ENCODE measurements at regions of chr18 and their contacts with region 1.

Region 1: GRCh38 chr18:26405190-26405801 is 143.1 kb downstream of the KCTD1 start:
- DNase-seq: peak; percentile 43 to 83 (median 64)
- H3K4me3 ChIP-seq: no peak overlapping the region
- H3K27ac ChIP-seq: no peak overlapping the region
- H3K4me1 ChIP-seq: no peaks in the 10 kb centered on the region
- H3K27me3 ChIP-seq: no peaks in the 10 kb centered on the region
- CTCF ChIP-seq: peak; percentile 21 to 59 (median 50)
- POLR2A ChIP-seq: no peak

Region 2: GRCh38 chr18:25998461-25998860 is 406.8 kb before region 1 on chr18:
- intact Hi-C with region 1: no loop called
- DNase-seq: no peak
- H3K4me3 ChIP-seq: no peak overlapping the region
- H3K27ac ChIP-seq: no peak overlapping the region
- H3K4me1 ChIP-seq: no peaks in the 10 kb centered on the region
- H3K27me3 ChIP-seq: no peaks in the 10 kb centered on the region
- CTCF ChIP-seq: no peak
- POLR2A ChIP-seq: no peak

Region 3: DNA sequence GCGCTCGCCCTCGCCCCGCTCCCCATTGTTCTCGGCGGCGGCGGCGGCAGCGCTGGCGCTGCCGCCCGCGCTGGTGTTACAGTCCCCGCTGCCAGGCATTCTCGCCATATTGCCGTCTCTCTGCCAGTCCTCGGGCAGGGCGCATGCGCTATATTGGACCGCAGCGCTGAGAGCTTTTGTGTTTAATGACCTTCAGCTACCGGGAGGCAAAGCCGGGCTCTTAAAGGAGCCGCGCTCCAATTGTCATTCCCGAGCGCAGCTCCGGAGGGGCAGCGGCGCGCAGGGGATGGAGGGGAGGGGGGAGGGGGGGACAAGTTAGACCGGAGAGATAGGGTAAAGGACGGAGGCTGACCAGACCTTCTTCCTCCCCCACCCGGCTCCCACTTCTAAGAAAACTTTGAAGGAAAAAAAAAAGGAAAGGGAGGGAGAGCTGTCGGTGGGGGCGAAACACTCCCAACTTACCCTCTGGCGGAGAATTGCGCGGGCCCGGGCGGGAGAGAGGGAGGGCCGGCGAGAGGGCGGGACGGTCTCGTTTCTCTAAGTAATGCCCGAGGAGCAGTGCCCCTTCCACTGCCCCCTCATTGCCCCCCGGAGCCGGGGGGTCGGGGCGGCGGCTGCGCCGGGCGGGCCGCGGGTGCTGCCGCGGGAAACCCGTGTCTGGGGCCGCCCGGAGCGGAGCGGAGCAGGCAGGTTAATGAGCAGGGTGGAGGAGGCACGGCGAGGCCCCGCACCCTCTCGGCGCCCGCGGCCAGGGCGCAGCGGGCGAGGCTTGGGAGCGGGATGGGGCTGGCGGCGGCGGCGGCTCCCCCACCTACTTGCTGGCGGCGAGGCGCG is 143.3 kb after region 1 on chr18 and contains the start of gene KCTD1:
- intact Hi-C with region 1: loop called in 1 of 2 experiments (anchors 10 kb)
- DNase-seq: peak; percentile 86 to 93 (median 89)
- H3K4me3 ChIP-seq: peak within 1 kb of the TSS; percentile 37 to 97 (median 70)
- H3K27ac ChIP-seq: peak within 1 kb of the TSS; percentile 56 to 91 (median 79)
- H3K4me1 ChIP-seq: peaks cover 10 to 48% of the 10 kb centered on the region in 2 donors
- H3K27me3 ChIP-seq: no peaks in the 10 kb centered on the region
- CTCF ChIP-seq: no peak
- POLR2A ChIP-seq: peak in 1 of 2 donors; percentile 1
- total RNA-seq, gene KCTD1: 9.8 to 44.8 (median 31.2) TPM

Region 4: DNA sequence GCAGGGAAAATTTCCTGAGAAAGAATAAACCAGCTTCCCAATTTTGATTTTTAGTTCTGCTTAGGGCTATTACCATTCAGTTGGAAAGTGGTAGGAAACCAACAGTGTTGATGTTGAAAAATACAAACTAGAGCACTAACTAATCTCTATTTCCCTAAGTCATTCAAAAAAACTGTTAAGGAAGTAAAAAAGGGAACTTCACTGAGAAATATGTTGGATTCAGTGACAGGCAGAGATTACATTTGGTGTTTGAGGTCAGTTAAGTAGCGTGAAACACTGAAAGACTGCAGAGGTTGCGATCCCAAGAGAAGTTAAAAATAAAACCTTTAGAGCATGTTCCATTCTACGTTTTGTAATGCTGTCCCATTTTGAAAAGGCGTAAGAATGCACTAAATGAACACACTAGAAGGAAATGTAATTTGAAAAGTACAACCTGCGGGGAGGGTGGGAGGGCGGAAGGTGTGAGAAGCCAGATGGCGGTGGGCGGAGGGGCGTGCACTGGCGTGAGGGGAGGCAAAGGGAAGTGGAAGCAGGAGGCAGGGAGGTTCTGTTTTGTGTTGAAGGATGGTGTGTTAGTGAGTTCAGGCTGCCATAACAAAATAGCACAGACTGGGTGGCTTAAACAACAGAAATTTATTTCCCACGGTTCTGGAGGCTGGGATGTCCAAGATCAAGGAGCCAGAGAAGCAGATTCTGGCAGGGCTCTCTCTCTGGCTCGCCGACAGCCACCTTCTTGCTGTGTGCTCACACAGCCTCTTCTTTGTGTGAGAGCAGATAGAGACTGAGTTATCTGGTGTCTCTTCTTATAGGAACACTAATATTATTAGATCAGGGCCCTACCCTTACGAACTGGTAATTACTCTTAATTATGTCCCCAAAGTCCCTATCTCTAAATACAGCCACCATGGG is 237.4 kb after region 1 on chr18:
- intact Hi-C with region 1: loop called (anchors 10 kb)
- DNase-seq: no peak
- H3K4me3 ChIP-seq: no peak overlapping the region
- H3K27ac ChIP-seq: peak overlapping the region in 1 of 5 donors; percentile 61
- H3K4me1 ChIP-seq: no peaks in the 10 kb centered on the region
- H3K27me3 ChIP-seq: no peaks in the 10 kb centered on the region
- CTCF ChIP-seq: no peak
- POLR2A ChIP-seq: no peak

Region 5: DNA sequence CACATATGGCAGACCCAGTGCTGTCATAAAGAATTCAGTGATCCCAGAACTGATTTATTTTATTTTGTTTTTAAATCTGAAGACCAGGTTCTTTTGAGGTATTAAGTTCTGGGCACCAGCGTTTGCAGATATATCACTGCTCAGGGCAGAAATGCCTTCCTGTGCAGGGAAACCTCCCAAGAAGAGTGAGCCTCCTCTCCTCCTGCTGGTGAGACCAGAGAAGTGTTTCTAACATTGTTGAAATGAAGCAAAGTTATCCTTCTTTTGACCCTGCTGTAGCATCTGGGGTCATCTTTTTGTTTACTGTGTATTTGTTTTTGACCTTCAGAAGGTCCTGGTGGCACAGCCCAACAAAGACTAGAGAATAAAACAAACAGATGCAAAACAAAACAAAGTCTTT is 366.2 kb after region 1 on chr18:
- intact Hi-C with region 1: loop called in 1 of 2 experiments (anchors 10 kb)
- DNase-seq: peak; percentile 38 to 67 (median 61)
- H3K4me3 ChIP-seq: no peak overlapping the region
- H3K27ac ChIP-seq: no peak overlapping the region
- H3K4me1 ChIP-seq: no peaks in the 10 kb centered on the region
- H3K27me3 ChIP-seq: no peaks in the 10 kb centered on the region
- CTCF ChIP-seq: peak; percentile 57 to 75 (median 70)
- POLR2A ChIP-seq: no peak

Region 6: DNA sequence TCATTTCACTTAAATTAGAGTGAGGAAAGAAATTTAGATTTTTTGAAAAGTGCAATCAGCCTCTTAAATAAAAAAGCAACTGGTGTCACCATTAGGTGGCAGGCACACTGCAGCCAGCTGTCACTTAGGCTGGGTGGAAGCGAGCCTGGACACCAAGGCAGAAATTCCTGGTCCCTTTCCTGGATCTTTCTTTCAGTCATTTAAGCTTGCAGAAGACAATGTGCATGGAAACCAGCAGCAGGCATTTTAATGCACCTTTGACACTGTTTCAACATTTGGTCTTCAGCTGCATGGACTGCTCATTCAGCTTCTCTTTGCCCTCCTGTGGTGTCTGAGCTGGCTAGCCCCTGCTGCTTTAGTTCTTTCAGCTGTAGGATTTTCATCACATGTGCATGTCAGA is 399.2 kb after region 1 on chr18:
- intact Hi-C with region 1: loop called in 1 of 2 experiments (anchors 10 kb)
- DNase-seq: peak in 3 of 7 donors; percentile 19 to 54 (median 30)
- H3K4me3 ChIP-seq: no peak overlapping the region
- H3K27ac ChIP-seq: no peak overlapping the region
- H3K4me1 ChIP-seq: no peaks in the 10 kb centered on the region
- H3K27me3 ChIP-seq: no peaks in the 10 kb centered on the region
- CTCF ChIP-seq: peak in 5 of 6 experiments; percentile 15 to 43 (median 19)
- POLR2A ChIP-seq: no peak

Measured in adrenal gland (tissue), 19 donors.